ENCODE measurements at regions of chr7 and their contacts with region 1.

Region 1: DNA sequence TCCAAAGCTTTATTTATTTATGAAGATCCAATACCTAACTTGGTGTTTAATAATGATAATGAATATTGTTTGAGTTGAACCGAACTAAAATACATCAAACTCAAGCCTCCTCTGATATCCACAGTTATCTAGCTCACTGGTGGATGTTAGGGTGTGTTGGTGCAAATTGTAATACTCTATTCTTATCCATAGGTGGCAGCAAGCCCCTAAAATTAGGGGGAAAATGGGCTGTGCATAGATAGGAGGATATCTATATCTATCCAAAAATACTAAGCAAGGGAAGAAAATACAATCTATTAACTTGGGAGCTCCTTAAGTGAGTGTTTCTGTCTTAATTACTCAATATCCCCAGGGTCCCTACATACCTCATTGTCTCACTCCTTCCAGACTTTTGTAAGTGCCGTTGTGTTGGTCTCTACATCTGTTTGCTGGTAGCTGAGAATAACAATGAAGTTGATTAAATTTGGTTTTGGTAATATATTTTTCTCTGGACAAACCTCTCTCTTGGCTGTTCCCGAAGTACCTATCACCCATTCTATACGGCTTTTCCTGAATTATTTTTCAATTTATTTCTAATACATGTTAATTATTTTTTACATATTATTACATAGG is 55.0 kb upstream of the VWDE start:
- DNase-seq: peak; percentile 41 to 43
- ATAC-seq: peak; percentile 92 to 99
- H3K4me3 ChIP-seq: no peak overlapping the region
- H3K27ac ChIP-seq: no peak overlapping the region
- H3K4me1 ChIP-seq: peaks cover 6% of the 10 kb centered on the region
- CTCF ChIP-seq: peak; percentile 80
- EP300 ChIP-seq: no peak
- POLR2A ChIP-seq: no peak
- RAD21 ChIP-seq: peak; percentile 73 to 81

Region 2: GRCh38 chr7:12436896-12437535 is 21.6 kb before region 1 on chr7:
- CTCF ChIA-PET with region 1: interaction called, 29 read pairs
- POLR2A ChIA-PET with region 1: no interaction called
- DNase-seq: peak in 1 of 2 experiments; percentile 20
- ATAC-seq: peak; percentile 54 to 72; a peak in 3 of 6 replicates
- H3K4me3 ChIP-seq: no peak overlapping the region
- H3K27ac ChIP-seq: no peak overlapping the region
- H3K4me1 ChIP-seq: no peaks in the 10 kb centered on the region; the same call in 2 of the 3 replicates
- CTCF ChIP-seq: peak; percentile 29; the same call in 2 of the 3 replicates
- EP300 ChIP-seq: no peak
- POLR2A ChIP-seq: no peak
- RAD21 ChIP-seq: peak; percentile 14; a peak in 1 of 5 replicates

Region 3: DNA sequence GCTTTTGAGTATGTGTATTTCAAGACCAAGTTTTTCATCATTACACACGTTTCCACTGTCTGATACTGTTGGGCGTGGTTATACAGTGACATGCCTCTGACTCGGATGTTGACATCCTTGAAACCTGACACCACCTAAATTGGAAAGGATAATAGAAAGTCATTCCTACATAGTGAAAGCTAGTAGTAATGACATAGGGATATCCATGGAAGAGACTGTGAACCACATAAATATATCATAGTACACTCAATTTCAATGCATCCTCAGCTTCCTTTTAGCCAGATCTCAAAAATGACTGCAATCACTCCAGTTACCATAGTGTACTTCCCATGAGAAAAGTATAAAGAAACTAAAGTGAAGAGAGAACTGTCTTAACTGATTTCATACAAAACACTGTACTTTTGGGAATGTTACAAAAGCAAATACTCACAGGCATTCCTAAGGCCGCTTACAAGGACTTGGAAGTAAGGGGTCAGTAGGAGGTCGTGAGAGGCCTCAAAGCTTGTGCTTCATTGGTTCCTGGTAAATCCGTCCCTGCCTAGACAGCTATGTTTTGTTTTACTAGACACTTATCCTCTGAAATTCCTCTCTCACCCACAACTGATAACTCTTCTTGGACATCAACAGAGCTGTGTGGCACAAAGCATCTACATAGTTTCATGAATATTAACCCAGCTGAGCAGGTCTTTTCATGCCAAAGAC is 16.9 kb after region 1 on chr7:
- CTCF ChIA-PET with region 1: interaction called, 15 read pairs
- POLR2A ChIA-PET with region 1: no interaction called
- DNase-seq: peak in 1 of 2 experiments; percentile 50
- ATAC-seq: peak; percentile 58 to 62; a peak in 4 of 6 replicates
- H3K4me3 ChIP-seq: no peak overlapping the region
- H3K27ac ChIP-seq: no peak overlapping the region
- H3K4me1 ChIP-seq: no peaks in the 10 kb centered on the region
- CTCF ChIP-seq: no peak
- EP300 ChIP-seq: no peak
- POLR2A ChIP-seq: no peak
- RAD21 ChIP-seq: no peak

Region 4: DNA sequence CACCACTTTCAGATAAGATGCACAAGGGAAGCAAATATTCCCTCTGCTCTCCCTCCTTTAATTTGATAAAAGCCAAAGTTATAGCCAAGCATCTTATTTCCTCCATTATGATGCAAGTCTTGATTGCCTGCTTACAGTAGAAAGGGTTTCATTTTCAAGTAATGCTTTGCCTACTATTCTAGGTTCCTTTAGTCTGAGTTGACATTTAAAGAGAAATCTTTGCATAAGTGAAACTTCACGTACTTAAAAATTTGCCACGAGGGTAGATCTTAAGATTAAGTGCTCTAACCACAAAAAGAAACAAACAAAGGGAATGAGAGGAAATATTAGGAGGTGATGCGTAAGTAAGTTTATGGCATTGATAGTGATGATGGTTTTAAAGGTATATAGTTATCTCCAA is 23.1 kb after region 1 on chr7:
- CTCF ChIA-PET with region 1: interaction called, 12 read pairs
- POLR2A ChIA-PET with region 1: no interaction called
- DNase-seq: no peak
- ATAC-seq: no peak
- H3K4me3 ChIP-seq: no peak overlapping the region
- H3K27ac ChIP-seq: no peak overlapping the region
- H3K4me1 ChIP-seq: no peaks in the 10 kb centered on the region
- CTCF ChIP-seq: no peak
- EP300 ChIP-seq: no peak
- POLR2A ChIP-seq: no peak
- RAD21 ChIP-seq: no peak

Region 5: DNA sequence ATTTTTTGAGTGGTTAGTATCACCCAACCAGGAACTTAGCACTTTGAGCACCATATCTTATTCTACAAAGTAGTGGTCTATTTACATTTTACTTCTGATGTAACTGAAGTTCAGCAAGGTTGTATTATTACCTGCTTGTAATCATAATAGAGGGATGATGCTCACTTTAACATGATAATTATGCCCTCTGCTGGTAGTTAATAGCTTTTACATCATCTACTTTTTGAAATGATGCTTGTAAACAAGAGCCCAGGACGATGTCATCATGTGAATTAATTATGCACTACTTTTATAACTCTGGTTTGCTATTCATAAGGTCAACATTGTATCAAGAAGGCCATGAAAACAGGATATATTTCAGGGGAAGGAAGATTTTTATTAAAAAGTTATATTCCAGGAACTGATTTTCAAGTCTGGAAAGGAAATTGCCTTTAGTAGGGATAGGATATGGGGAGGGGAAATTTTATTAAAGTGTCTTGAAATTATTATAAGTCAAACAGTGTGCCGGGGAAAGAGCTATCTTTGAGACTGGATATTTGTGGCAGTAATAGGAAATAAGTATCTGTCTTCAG is 31.6 kb after region 1 on chr7:
- CTCF ChIA-PET with region 1: interaction called, 62 read pairs
- POLR2A ChIA-PET with region 1: no interaction called
- DNase-seq: peak; percentile 33 to 49
- ATAC-seq: peak; percentile 76 to 80; a peak in 5 of 6 replicates
- H3K4me3 ChIP-seq: no peak overlapping the region
- H3K27ac ChIP-seq: no peak overlapping the region
- H3K4me1 ChIP-seq: no peaks in the 10 kb centered on the region
- CTCF ChIP-seq: peak; percentile 83
- EP300 ChIP-seq: no peak
- POLR2A ChIP-seq: no peak
- RAD21 ChIP-seq: peak; percentile 70 to 80

Measured in A549 (cell line).